ENCODE measurements at regions of chr13 and their contacts with region 1.

Region 1: GRCh38 chr13:50081679-50082425 is 66.6 kb downstream of the KCNRG start:
- DNase-seq: peak; percentile 96
- ATAC-seq: peak; percentile 86
- H3K4me3 ChIP-seq: peak overlapping the region; percentile 78 to 93 (median 91)
- H3K27ac ChIP-seq: peak overlapping the region; percentile 96
- H3K4me1 ChIP-seq: peaks cover 45% of the 10 kb centered on the region
- H3K27me3 ChIP-seq: no peaks in the 10 kb centered on the region; a peak in 1 of 5 replicates
- CTCF ChIP-seq: peak; percentile 19; the same call in 1 of the 2 replicates
- EP300 ChIP-seq: no peak
- POLR2A ChIP-seq: peak; percentile 55 to 63; a peak in 3 of 4 replicates
- RAD21 ChIP-seq: 0 out of 2 replicates have a peak, but pooled peaks have one; percentile 2

Region 2: GRCh38 chr13:49679246-49679645 is 402.6 kb before region 1 on chr13:
- CTCF ChIA-PET with region 1: no interaction called
- POLR2A ChIA-PET with region 1: no interaction called
- in situ Hi-C with region 1: no loop called
- intact Hi-C with region 1: no loop called
- DNase-seq: peak; percentile 39
- ATAC-seq: peak; percentile 76
- H3K4me3 ChIP-seq: no peak overlapping the region
- H3K27ac ChIP-seq: no peak overlapping the region
- H3K4me1 ChIP-seq: peaks cover 7% of the 10 kb centered on the region
- H3K27me3 ChIP-seq: no peaks in the 10 kb centered on the region
- CTCF ChIP-seq: peak; percentile 66
- EP300 ChIP-seq: no peak
- POLR2A ChIP-seq: no peak
- RAD21 ChIP-seq: 0 out of 2 replicates have a peak, but pooled peaks have one; percentile 13

Region 3: DNA sequence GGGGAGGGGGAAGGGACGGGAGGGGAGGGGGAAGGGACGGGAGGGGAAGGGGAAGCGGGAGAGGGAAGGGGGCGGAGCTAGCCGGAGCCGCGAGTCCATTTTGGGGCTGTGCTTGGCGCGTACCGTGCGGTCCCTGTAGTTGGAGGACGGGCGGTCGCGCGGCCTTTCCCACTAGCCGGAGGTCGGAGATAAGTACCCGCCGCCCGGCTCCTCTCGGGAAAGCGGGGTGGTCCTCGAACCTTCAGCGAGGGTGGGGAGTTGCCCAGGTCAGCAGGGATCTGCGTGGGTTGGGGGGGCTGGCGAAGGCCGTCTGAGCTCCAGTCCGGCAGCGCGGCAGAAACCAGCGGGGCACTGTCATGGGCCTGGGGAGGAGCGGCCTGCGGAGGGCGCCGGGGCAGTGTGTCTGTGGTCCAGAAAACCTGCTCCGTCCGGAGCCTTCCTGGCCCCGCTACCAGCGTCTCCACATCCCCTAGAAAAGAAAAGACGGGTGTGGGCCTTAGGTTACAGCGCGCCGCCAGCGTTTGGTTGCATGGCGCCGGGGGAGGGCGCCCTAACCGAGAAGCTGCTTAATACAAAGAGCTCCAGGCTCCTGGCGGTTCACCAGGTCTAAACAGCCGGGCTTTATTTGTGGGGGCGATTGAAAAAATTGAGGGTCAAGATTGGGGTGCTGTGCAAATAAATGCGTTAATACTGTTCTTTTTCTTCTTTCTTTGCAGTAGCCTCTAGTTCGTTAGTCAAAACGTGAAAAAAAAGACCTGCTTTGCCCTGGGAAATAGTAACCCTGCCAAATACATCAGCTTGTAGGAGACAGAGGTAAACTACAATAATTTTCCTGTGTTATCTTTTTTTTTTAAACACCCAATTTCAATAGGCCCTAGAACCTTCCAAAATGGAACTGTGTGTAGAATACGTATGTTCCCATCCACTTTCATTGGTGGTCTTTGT is 84.6 kb before region 1 on chr13 and contains the start of gene TRIM13:
- CTCF ChIA-PET with region 1: no interaction called
- POLR2A ChIA-PET with region 1: interaction called, 39 read pairs
- in situ Hi-C with region 1: no loop called
- intact Hi-C with region 1: loop called (anchors 1 kb)
- DNase-seq: peak; percentile 79
- ATAC-seq: peak; percentile 91
- H3K4me3 ChIP-seq: peak within 1 kb of the TSS; percentile 88 to 98 (median 95)
- H3K27ac ChIP-seq: peak within 1 kb of the TSS; percentile 94
- H3K4me1 ChIP-seq: peaks cover 30% of the 10 kb centered on the region
- H3K27me3 ChIP-seq: no peaks in the 10 kb centered on the region; a peak in 1 of 5 replicates
- CTCF ChIP-seq: peak; percentile 85
- EP300 ChIP-seq: no peak
- POLR2A ChIP-seq: peak; percentile 82 to 84
- RAD21 ChIP-seq: peak; percentile 68
- total RNA-seq, gene TRIM13: 18.8 and 22.0 TPM in 2 replicates

Region 4: DNA sequence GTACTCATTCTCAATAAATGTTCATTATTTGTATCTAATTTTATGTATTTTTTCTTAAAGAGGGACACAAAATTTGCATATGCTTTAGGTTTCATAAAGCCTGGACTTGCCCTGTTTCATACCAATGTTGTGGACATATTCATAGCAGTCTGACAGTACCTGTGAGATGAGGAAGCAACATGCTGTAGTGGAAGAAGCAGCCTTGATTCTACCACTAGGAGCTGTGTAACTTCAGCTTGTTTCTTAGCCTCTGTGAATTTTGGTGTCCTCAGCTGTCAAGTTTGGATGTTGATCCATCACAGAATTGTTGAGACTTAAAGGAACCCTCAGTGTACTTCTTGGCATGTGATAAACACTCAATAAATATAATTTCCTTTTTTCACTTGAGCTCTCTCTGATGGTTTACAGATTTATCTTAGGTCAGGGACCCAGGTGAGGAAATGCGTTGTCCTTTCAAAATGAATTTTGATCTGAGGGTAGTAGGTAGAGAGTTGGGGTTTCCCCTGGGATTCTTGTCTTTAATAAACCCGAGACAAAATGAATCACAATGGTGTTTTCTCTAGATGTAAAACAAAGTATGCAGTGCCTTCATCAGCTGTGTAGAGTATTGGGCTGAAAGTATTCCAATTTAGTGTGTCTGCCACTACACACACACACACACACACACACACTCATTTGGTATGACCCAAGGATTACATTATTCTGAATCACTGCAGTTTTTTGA is 85.5 kb after region 1 on chr13:
- CTCF ChIA-PET with region 1: no interaction called
- POLR2A ChIA-PET with region 1: no interaction called
- in situ Hi-C with region 1: no loop called
- intact Hi-C with region 1: loop called (anchors 5 kb)
- DNase-seq: no peak
- ATAC-seq: peak; percentile 50
- H3K4me3 ChIP-seq: no peak overlapping the region
- H3K27ac ChIP-seq: no peak overlapping the region
- H3K4me1 ChIP-seq: peaks cover 14% of the 10 kb centered on the region
- H3K27me3 ChIP-seq: no peaks in the 10 kb centered on the region
- CTCF ChIP-seq: no peak
- EP300 ChIP-seq: no peak
- POLR2A ChIP-seq: no peak
- RAD21 ChIP-seq: no peak

Region 5: DNA sequence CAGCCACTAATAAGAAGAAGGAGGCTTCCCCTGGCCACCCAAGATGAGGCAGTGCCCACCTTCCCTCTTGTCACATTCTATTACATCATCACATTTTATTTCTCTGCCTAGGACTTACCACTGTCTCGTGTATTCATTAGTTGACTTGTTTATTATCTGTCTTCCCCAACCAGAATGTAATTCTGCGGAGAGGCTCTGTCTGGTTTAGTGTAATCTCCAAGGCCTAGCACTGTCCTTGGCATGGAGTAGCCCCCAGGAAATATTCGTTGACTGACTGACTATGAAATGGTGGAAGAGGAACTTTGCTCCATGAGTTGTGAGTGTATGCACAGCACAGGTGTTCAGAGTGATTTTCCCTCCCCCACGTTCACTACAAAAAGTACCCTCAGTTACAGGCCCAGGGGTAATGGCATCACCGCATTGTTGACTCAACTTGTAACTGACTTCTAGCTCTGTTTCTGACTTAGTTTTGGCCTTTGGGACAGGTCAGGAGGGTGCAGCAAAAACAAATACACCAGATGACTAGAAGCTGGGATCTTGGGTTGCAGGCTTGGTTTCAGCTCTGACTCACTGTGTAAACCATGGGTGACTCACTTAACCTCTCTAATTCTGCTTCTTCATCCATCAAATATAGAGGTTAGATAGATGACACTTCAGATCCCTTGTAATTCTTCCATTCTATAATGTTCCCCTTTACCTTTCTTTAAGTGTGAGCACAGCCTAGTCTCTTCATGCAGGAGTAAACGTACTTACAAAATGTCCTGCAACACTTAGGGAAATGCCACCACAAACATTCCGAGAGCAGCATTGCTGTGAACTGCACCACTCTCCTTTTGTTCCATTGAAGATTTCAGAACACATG is 163.1 kb after region 1 on chr13:
- CTCF ChIA-PET with region 1: no interaction called
- POLR2A ChIA-PET with region 1: no interaction called
- in situ Hi-C with region 1: no loop called
- intact Hi-C with region 1: loop called (anchors 10 kb)
- DNase-seq: peak; percentile 99
- ATAC-seq: peak; percentile 95
- H3K4me3 ChIP-seq: peak overlapping the region in 2 of 3 experiments; percentile 17 to 42; a peak in 1 of 6 replicates
- H3K27ac ChIP-seq: peak overlapping the region; percentile 98
- H3K4me1 ChIP-seq: peaks cover 90% of the 10 kb centered on the region
- H3K27me3 ChIP-seq: no peaks in the 10 kb centered on the region
- CTCF ChIP-seq: 0 out of 2 replicates have a peak, but pooled peaks have one; percentile 22
- EP300 ChIP-seq: peak; percentile 72 to 95; a peak in 3 of 4 replicates
- POLR2A ChIP-seq: peak in 1 of 2 experiments; percentile 58; a peak in 1 of 4 replicates
- RAD21 ChIP-seq: peak; percentile 52; the same call in 1 of the 2 replicates

Region 6: GRCh38 chr13:50512474-50513299 is 430.8 kb after region 1 on chr13:
- CTCF ChIA-PET with region 1: interaction called, 3 read pairs
- POLR2A ChIA-PET with region 1: no interaction called
- in situ Hi-C with region 1: no loop called
- intact Hi-C with region 1: loop called (anchors 5 kb)
- DNase-seq: peak; percentile 47
- ATAC-seq: peak; percentile 93
- H3K4me3 ChIP-seq: peak overlapping the region; percentile 36 to 71 (median 62)
- H3K27ac ChIP-seq: peak overlapping the region; percentile 76
- H3K4me1 ChIP-seq: peaks cover 63% of the 10 kb centered on the region
- H3K27me3 ChIP-seq: no peaks in the 10 kb centered on the region
- CTCF ChIP-seq: no peak
- EP300 ChIP-seq: no peak
- POLR2A ChIP-seq: no peak
- RAD21 ChIP-seq: no peak

Region 7: DNA sequence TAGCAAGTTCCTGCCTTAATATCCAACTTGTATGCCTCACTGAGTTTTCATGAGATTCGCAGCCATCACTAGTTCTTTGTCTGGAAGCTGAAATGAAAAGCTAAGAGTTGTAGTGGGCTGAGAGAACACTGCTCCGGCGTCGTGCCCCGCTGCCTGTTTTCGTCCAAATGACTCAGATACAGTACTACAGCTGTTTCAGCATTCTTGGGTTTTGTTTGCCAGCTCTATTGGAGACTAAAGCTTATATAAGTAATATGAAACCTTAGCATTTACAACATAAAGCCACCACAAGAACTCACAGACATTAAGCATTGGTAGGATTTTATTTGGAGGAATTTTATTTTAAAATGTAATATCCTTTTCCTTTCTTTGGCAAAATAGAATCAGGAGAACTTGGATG is 461.9 kb after region 1 on chr13:
- CTCF ChIA-PET with region 1: no interaction called
- POLR2A ChIA-PET with region 1: no interaction called
- in situ Hi-C with region 1: no loop called
- intact Hi-C with region 1: no loop called
- DNase-seq: no peak
- ATAC-seq: no peak
- H3K4me3 ChIP-seq: no peak overlapping the region
- H3K27ac ChIP-seq: no peak overlapping the region
- H3K4me1 ChIP-seq: no peaks in the 10 kb centered on the region
- H3K27me3 ChIP-seq: no peaks in the 10 kb centered on the region
- CTCF ChIP-seq: no peak
- EP300 ChIP-seq: no peak
- POLR2A ChIP-seq: no peak
- RAD21 ChIP-seq: no peak

Region 8: DNA sequence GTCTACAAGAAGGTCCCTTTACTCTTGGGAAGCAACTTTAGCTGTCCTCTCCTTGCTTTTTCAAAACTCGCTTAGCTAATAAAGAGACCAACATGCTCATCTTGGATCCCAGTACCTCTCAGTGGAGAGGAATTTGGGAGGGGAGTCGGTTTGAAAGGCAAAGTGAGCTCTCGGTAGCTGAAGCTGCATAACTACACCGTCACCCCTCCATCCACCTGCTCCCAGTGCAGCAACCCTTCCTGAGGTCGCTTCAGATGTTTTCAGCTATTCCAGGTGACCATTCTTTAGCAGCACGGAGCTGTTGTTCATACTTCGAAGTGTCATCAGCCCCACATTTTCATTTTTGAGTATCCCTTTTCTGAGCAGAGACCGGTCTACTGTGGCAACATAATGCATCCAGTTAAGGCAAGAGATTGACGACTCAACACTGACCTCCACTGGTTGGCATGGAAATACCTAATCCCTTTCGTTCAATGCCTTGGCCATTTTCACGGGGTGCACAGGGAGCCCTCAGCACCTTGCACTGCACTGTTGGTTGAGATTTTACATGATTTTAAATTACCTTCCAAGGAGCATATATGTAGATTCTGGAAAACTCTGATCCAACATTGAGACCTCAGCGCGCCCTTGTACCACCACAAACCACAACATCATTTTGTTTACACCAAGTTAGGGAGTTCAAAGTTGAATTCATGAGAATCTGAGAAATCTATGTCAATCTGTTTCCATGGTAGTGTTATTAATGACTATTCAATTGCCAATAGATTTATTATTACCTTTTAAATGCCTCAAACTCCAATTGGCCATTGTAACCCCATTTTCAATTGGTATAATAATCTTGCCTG is 719.5 kb after region 1 on chr13:
- CTCF ChIA-PET with region 1: no interaction called
- POLR2A ChIA-PET with region 1: no interaction called
- in situ Hi-C with region 1: loop called (anchors 10 kb)
- intact Hi-C with region 1: loop called (anchors 1 kb)
- DNase-seq: peak; percentile 57
- ATAC-seq: peak; percentile 99
- H3K4me3 ChIP-seq: no peak overlapping the region
- H3K27ac ChIP-seq: no peak overlapping the region
- H3K4me1 ChIP-seq: no peaks in the 10 kb centered on the region
- H3K27me3 ChIP-seq: no peaks in the 10 kb centered on the region
- CTCF ChIP-seq: peak; percentile 92
- EP300 ChIP-seq: no peak
- POLR2A ChIP-seq: no peak
- RAD21 ChIP-seq: peak; percentile 70

Measured in HepG2 (cell line).